ENCODE measurements at regions of chr17 and their contacts with region 1.

Region 1: GRCh38 chr17:58577642-58578091 is 63.2 kb upstream of the MTMR4 start:
- DNase-seq: peak; percentile 49
- H3K4me3 Mint-ChIP-seq: no peak overlapping the region
- H3K27ac Mint-ChIP-seq: no peak overlapping the region
- H3K4me1 Mint-ChIP-seq: peaks cover 4% of the 10 kb centered on the region
- H3K27me3 Mint-ChIP-seq: peaks cover 4% of the 10 kb centered on the region

Region 2: GRCh38 chr17:58587702-58588254 is 10.1 kb after region 1 on chr17:
- CTCF ChIA-PET with region 1: interaction called, 15 read pairs
- POLR2A ChIA-PET with region 1: no interaction called
- DNase-seq: peak; percentile 57
- H3K4me3 Mint-ChIP-seq: no peak overlapping the region
- H3K27ac Mint-ChIP-seq: no peak overlapping the region
- H3K4me1 Mint-ChIP-seq: no peaks in the 10 kb centered on the region
- H3K27me3 Mint-ChIP-seq: peaks cover 3% of the 10 kb centered on the region